Left lung (tissue), 14 donors: ENCODE measurements at regions of chr16 and their contacts with region 1.

Region 1: GRCh38 chr16:81723098-81723723 is 55.9 kb upstream of the PLCG2 start:
- DNase-seq: peak in 2 of 4 donors; percentile 79 to 86
- ATAC-seq: peak; percentile 98
- H3K4me3 ChIP-seq: no peak overlapping the region
- H3K27ac ChIP-seq: no peak overlapping the region
- H3K4me1 ChIP-seq: peaks cover 0 to 8% of the 10 kb centered on the region in 2 donors
- H3K27me3 ChIP-seq: no peaks in the 10 kb centered on the region
- CTCF ChIP-seq: peak; percentile 54 to 69

Region 2: DNA sequence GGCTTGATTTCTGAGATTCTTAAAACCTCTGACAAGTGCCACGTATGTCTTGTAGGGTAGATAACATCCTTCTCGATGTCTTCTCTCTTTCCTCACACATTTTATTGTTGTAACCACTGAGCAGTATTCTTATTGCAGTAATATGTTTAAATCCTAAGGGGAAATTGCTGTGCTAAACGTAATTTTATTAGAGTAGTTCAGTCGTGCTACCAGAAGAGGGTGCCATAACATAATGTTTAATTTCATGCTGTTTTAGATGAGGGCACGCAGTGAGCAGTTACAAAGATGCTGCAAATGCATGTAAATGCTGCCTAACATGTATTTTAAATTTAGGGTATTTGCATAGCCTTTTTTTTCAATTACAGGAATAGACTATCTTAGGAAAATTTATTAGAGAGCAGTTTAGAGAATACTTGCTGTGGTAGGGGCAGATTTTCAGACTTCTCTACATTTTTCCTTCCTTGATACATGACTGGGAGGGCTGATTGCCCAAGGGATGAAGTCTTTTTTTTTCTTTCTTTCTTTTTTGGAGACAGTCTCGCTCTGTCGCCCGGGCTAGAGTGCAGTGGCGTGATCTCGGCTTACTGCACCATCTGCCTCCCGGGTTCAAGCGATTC is 356.8 kb before region 1 on chr16:
- intact Hi-C with region 1: loop called in 1 of 2 experiments (anchors 10 kb)
- DNase-seq: peak in 2 of 4 donors; percentile 60 to 65
- ATAC-seq: peak; percentile 88
- H3K4me3 ChIP-seq: no peak overlapping the region
- H3K27ac ChIP-seq: no peak overlapping the region
- H3K4me1 ChIP-seq: no peaks in the 10 kb centered on the region
- H3K27me3 ChIP-seq: no peaks in the 10 kb centered on the region
- CTCF ChIP-seq: peak; percentile 41 to 57

Region 3: GRCh38 chr16:81403616-81404373 is 319.4 kb before region 1 on chr16:
- intact Hi-C with region 1: loop called in 1 of 2 experiments (anchors 5 kb)
- DNase-seq: peak; percentile 78 to 98 (median 87)
- ATAC-seq: peak; percentile 97
- H3K4me3 ChIP-seq: no peak overlapping the region
- H3K27ac ChIP-seq: no peak overlapping the region
- H3K4me1 ChIP-seq: peaks cover 0 to 9% of the 10 kb centered on the region in 2 donors
- H3K27me3 ChIP-seq: no peaks in the 10 kb centered on the region
- CTCF ChIP-seq: peak; percentile 93 to 98

Region 4: GRCh38 chr16:81623363-81624102 is 99.7 kb before region 1 on chr16:
- intact Hi-C with region 1: loop called in 1 of 2 experiments (anchors 10 kb)
- DNase-seq: no peak
- ATAC-seq: peak; percentile 40
- H3K4me3 ChIP-seq: no peak overlapping the region
- H3K27ac ChIP-seq: no peak overlapping the region
- H3K4me1 ChIP-seq: peaks cover 9 to 16% of the 10 kb centered on the region in 2 donors
- H3K27me3 ChIP-seq: no peaks in the 10 kb centered on the region
- CTCF ChIP-seq: peak; percentile 41 to 55

Region 5: DNA sequence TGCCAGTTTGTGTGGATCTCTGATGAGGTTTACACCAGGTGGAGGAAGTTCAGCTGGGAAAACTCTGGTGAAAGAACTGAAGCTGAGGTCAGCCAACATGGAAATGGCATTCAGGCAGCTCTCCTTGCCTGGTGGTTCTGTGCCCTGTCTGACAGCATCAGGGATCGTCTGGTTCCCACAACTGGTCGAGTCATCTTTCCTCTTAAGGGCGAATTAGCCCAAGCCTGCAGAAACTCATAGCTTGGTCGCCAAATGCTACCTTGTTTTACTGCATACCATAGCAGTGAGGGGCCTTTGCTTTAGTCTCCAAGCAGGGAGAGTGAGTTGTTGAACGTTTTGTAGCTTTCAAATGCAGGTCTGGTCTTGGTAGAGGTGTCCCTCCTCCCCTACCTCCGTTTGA is 63.1 kb after region 1 on chr16:
- intact Hi-C with region 1: no loop called
- DNase-seq: no peak
- ATAC-seq: no peak
- H3K4me3 ChIP-seq: no peak overlapping the region
- H3K27ac ChIP-seq: no peak overlapping the region
- H3K4me1 ChIP-seq: peaks cover 0 to 31% of the 10 kb centered on the region in 2 donors
- H3K27me3 ChIP-seq: no peaks in the 10 kb centered on the region
- CTCF ChIP-seq: no peak

Region 6: DNA sequence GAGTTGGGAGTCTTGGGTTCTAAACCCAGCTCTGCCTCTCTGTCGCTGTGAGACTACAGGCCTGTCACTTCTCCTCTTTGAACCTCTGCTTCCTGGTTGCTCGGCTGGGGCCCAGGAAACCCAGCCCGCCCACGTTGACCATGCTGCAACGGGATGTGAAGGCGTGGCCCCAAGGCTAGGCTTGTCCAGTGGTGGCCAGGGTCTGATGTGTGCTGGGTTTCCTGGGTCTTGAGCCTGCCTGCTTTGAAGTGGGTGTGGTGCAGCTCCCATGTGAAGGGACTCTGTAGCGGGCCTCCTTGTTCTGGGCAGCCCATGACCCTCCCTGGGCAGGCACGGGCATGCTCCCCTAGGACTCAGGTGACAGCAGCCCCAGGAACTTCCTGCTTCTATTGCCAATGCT is 205.8 kb after region 1 on chr16:
- intact Hi-C with region 1: no loop called
- DNase-seq: peak in 1 of 4 donors; percentile 79
- ATAC-seq: peak; percentile 18
- H3K4me3 ChIP-seq: no peak overlapping the region
- H3K27ac ChIP-seq: no peak overlapping the region
- H3K4me1 ChIP-seq: peaks cover 0 to 5% of the 10 kb centered on the region in 2 donors
- H3K27me3 ChIP-seq: no peaks in the 10 kb centered on the region
- CTCF ChIP-seq: no peak